MCF 10A (cell line): ENCODE measurements at regions of chrX and their contacts with region 1.

Region 1: DNA sequence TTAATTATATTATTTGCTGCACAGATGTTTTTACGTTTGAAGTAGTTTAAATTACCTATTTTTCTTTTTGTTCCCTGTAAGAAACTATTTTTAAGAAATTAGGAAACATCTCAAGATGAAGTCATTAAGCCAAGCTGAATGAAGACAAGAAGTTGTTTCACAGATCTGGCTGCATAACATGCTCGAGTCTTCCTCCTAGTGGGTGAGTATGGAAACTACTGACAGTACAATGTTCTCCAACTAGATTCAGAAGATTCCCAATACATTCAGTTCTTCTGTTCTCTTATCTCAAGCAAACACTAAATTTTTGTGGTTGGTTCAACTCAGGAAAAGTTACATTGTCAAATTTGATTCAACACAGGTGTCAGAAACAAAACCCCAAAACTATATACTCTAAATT is 256.8 kb upstream of the VCX start:
- DNase-seq: peak; percentile 54
- H3K4me3 Mint-ChIP-seq: no peak overlapping the region
- H3K27ac Mint-ChIP-seq: no peak overlapping the region
- H3K4me1 Mint-ChIP-seq: no peaks in the 10 kb centered on the region
- H3K27me3 Mint-ChIP-seq: no peaks in the 10 kb centered on the region
- CTCF ChIP-seq: peak; percentile 65

Region 2: GRCh38 chrX:7068939-7069371 is 517.2 kb before region 1 on chrX:
- CTCF ChIA-PET with region 1: interaction called, 3 read pairs
- POLR2A ChIA-PET with region 1: no interaction called
- intact Hi-C with region 1: loop called (anchors 1 kb)
- DNase-seq: peak; percentile 90
- H3K4me3 Mint-ChIP-seq: no peak overlapping the region
- H3K27ac Mint-ChIP-seq: peak overlapping the region; percentile 39
- H3K4me1 Mint-ChIP-seq: peaks cover 15% of the 10 kb centered on the region
- H3K27me3 Mint-ChIP-seq: no peaks in the 10 kb centered on the region
- CTCF ChIP-seq: peak; percentile 40

Region 3: DNA sequence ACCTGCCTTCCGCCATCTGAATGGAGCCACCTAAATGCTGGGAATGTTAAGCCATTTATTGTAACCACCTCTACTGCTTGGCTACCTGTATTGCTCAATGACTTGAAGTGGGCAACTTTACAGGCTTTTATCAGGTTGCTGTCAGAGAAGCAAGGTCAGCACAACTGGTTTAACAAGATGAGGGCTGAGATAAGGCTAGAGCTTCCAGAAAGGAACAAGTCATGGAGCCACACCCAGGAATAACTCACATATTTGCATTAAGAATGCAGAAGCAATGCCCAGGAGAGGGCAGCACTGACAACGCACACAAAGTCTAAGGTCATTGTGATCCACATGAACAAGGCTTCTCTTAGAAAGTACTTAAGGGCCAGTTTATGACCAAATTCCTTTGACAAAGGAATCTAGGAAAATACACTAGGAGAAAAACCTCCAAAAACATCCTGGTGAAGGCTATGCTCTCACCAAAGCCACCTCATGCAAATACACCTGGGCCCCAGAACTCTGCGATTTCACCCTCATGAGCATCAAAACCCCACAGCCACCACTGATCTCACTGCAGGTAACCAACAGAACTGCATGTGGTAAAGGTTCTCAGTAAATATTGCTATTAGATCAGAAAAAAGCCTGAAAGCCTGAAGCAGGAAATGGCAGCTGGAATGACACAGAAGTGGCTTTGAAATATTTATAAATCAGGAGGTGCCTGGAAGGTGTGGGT is 453.6 kb before region 1 on chrX:
- CTCF ChIA-PET with region 1: interaction called, 11 read pairs
- POLR2A ChIA-PET with region 1: interaction called, 5 read pairs
- intact Hi-C with region 1: loop called (anchors 1 kb)
- DNase-seq: peak; percentile 86
- H3K4me3 Mint-ChIP-seq: peak overlapping the region; percentile 26
- H3K27ac Mint-ChIP-seq: peak overlapping the region; percentile 78
- H3K4me1 Mint-ChIP-seq: peaks cover 18% of the 10 kb centered on the region
- H3K27me3 Mint-ChIP-seq: no peaks in the 10 kb centered on the region
- CTCF ChIP-seq: peak; percentile 67

Region 4: DNA sequence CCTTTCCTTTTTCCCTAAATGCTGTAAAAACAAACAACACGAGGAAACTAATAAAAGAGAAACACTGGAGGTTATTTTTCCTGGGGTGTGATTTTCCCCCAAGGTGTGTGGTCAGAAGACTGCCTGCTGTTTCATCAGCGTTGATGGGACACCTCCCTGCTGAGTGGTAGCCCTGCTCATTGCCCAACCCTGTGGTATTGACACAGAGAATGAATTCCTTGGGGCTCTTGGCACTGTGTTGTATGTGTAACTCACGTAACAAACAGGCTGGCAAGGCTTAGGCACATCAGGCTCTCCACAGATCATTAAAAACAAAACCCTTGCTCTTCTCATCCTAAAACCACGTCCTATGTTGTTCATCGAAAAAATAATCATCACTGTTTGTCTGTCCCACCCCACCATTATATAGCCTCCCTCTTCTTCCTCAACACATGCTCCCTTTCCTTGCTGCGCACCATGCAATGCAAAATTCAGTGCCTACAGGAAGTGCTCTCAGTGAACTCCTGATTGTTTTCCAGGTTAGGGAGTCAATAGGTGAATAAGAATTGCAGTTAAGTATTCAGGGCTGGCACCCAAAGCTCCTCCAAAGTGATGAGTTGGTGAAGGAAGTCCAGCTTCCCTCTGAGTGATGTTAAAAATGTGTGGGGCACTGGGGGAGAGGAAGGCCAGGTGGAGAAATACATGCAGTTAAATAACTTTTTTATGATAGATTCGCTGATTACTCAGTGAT is 426.8 kb before region 1 on chrX:
- CTCF ChIA-PET with region 1: interaction called, 3 read pairs
- POLR2A ChIA-PET with region 1: no interaction called
- intact Hi-C with region 1: loop called (anchors 1 kb)
- DNase-seq: peak; percentile 97
- H3K4me3 Mint-ChIP-seq: peak overlapping the region; percentile 56
- H3K27ac Mint-ChIP-seq: peak overlapping the region; percentile 82
- H3K4me1 Mint-ChIP-seq: peaks cover 15% of the 10 kb centered on the region
- H3K27me3 Mint-ChIP-seq: peaks cover 1% of the 10 kb centered on the region
- CTCF ChIP-seq: no peak

Region 5: DNA sequence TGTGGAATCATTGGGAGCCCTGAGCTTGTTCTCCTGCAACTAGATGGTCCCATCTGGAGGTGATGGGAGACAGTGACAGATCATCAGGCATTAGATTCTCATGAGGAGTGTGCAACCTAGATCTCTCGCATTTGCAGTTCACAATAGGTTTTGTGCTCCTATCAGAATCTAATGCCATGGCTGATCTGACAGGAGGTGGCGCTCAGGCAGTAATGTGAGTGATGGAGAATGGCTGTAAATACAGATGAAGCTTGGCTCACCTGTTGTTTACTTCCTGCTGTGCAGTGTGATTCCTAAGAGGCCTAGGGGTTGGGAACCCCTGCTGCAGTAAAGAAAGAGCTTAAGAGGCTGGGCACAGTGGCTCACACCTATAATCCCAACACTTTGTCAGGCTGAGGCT is 396.0 kb before region 1 on chrX:
- CTCF ChIA-PET with region 1: no interaction called
- POLR2A ChIA-PET with region 1: no interaction called
- intact Hi-C with region 1: loop called (anchors 1 kb)
- DNase-seq: peak; percentile 13
- H3K4me3 Mint-ChIP-seq: no peak overlapping the region
- H3K27ac Mint-ChIP-seq: no peak overlapping the region
- H3K4me1 Mint-ChIP-seq: no peaks in the 10 kb centered on the region
- H3K27me3 Mint-ChIP-seq: no peaks in the 10 kb centered on the region
- CTCF ChIP-seq: no peak

Region 6: DNA sequence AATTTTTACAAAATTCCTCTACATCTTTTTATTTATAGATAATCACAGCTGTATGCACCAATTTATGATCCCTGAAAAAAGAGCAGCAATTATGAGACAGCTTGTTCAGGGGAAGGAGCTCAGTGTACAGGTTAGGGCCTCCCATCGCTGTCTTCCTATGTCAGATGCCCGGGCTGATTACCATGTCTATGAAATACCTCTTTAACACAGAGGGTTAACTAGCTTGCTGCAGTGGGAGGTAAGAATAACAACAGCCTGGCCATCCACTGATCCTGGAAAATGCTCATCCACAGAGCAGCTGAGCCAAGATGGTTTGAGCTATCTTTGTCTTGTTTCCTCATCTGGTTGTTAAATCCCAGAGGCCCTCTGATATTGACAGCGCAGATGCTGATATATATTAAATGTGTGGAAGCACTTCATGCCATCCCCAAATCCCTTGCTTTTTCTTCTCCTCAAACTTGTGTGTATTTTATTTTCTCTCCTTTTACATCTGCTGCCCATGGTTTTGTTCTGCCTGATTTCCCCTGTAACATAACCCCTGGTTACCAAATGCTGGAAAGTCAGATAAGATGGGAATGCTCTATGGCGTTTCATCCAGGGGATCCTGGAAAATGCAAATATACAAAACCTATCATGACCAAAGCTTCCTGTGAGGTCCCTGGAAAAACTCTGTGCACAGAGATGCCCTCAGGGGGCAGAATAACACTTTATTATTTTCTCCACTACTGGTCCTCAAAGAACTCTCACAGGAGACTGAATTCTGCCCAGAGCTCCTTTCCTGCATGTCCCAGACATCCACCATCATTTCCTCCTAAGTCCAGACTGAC is 352.3 kb before region 1 on chrX:
- CTCF ChIA-PET with region 1: no interaction called
- POLR2A ChIA-PET with region 1: no interaction called
- intact Hi-C with region 1: loop called (anchors 1 kb)
- DNase-seq: peak; percentile 11
- H3K4me3 Mint-ChIP-seq: no peak overlapping the region
- H3K27ac Mint-ChIP-seq: no peak overlapping the region
- H3K4me1 Mint-ChIP-seq: no peaks in the 10 kb centered on the region
- H3K27me3 Mint-ChIP-seq: no peaks in the 10 kb centered on the region
- CTCF ChIP-seq: no peak